ENCODE measurements at regions of chr9 and their contacts with region 1.

Region 1: GRCh38 chr9:82443312-82443711 is 454.7 kb downstream of the SPATA31D1 start:
- DNase-seq: no peak
- ATAC-seq: no peak

Region 2: GRCh38 chr9:82382887-82383616 is 60.3 kb before region 1 on chr9:
- intact Hi-C with region 1: loop called in 1 of 2 experiments (anchors 10 kb)
- DNase-seq: no peak
- ATAC-seq: no peak